ENCODE measurements at regions of chr9 and their contacts with region 1.

Region 1: DNA sequence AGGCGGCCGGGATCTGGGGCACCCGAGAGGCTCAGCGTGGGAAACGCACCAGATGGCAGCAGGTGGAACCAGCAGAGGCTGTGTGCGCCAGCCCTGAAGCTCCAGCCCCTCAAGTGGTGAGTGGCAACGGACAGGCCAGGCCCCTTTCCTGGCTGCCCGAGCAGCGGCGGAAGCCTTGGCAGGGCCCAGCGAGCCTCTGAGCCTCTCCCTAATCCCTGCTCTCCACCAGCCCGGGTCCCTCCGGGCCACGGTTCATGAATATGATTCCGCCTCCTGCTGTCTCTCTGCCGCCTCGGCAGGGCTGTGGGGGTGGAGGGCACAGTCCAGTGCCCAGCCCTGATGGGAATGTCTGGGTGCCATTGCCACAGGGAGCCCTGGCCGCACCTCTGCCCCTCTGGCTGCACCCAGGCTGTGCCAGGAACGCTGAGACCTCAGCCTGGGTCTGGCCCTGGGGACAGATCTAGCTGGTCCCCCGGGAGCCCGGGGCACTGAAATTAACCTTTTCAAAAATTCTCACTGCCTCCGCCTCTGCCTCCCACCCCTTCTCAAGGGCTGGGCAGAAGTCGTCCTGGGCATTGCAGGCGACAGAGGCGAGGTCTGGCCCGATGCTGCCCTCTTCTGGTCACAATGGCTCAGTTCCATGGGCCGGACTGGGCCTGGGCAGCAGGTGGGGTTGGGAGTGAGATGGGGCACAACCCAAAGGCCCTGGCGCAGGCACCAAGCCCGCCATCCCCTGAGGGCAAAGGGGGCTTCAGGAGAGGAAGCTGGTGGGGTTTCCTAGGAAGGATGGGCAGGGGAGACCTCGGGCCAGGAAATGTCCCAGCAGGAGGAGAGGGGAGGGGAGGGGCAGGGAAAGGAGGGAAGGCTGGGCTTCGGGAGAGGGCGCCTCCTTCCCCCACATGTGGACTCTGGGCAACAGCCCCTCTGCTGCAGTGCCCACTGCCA is 20.3 kb downstream of the CCDC187 start:
- DNase-seq: peak; percentile 82
- H3K4me3 Mint-ChIP-seq: no peak overlapping the region
- H3K27ac Mint-ChIP-seq: no peak overlapping the region
- H3K4me1 Mint-ChIP-seq: peaks cover 7% of the 10 kb centered on the region
- H3K27me3 Mint-ChIP-seq: peaks cover 22% of the 10 kb centered on the region

Region 2: GRCh38 chr9:136267261-136268111 is 16.1 kb before region 1 on chr9:
- CTCF ChIA-PET with region 1: interaction called, 10 read pairs
- DNase-seq: peak; percentile 89
- H3K4me3 Mint-ChIP-seq: peak overlapping the region; percentile 62
- H3K27ac Mint-ChIP-seq: peak overlapping the region; percentile 63
- H3K4me1 Mint-ChIP-seq: peaks cover 10% of the 10 kb centered on the region
- H3K27me3 Mint-ChIP-seq: peaks cover 24% of the 10 kb centered on the region

Region 3: GRCh38 chr9:136297016-136297691 is 13.6 kb after region 1 on chr9:
- CTCF ChIA-PET with region 1: no interaction called
- DNase-seq: no peak
- H3K4me3 Mint-ChIP-seq: no peak overlapping the region
- H3K27ac Mint-ChIP-seq: no peak overlapping the region
- H3K4me1 Mint-ChIP-seq: no peaks in the 10 kb centered on the region
- H3K27me3 Mint-ChIP-seq: peaks cover 4% of the 10 kb centered on the region

Region 4: GRCh38 chr9:136488247-136489214 is 205.0 kb after region 1 on chr9:
- CTCF ChIA-PET with region 1: no interaction called
- DNase-seq: peak; percentile 84
- H3K4me3 Mint-ChIP-seq: no peak overlapping the region
- H3K27ac Mint-ChIP-seq: no peak overlapping the region
- H3K4me1 Mint-ChIP-seq: peaks cover 7% of the 10 kb centered on the region
- H3K27me3 Mint-ChIP-seq: peaks cover 27% of the 10 kb centered on the region